ENCODE measurements at regions of chr11 and their contacts with region 1.

Region 1: DNA sequence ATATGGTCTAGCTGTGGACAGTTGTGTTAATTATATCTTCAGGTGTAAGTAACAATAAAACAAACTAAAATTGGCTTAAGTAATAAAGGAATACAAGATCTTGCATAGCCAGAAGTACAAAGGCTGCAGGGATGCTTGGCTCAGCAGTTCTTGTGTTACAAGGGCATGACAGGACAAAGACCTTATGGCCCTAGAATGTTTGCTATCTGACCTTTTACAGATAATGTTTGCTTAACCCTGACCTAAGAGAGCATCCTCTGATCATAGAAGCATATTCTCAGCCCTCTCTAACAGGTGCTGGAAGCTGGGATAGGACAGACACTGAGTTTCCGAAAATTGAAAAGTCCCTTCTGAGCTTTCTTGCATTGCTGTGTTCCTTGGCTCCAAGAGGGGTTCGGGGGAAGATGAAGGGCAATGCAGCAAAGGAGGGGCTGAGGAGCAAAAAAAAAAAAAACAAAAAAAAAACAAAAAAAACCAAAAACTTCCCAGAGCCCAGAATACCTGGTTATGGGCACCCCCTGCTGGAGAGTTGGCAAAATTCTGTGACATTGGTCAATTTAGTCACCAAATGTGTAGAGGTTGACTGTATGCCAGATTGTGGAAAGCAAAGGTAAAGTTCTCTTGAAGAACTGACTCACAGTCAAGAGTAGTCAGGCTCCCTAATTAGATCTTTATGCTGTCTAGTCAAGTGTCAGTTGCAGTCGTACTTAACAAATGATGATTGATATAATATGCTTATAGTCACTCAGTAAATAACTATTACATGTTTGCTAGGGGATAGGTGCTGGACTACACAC is 10.4 kb upstream of the HIKESHI start:
- DNase-seq: peak; percentile 27
- ATAC-seq: peak; percentile 48
- H3K4me3 ChIP-seq: no peak overlapping the region
- H3K27ac ChIP-seq: no peak overlapping the region; the same call in 1 of the 2 replicates
- H3K4me1 ChIP-seq: peaks cover 41% of the 10 kb centered on the region
- H3K27me3 ChIP-seq: no peaks in the 10 kb centered on the region
- CTCF ChIP-seq: peak; percentile 70 to 79 (median 71)
- EP300 ChIP-seq: no peak
- POLR2A ChIP-seq: no peak
- RAD21 ChIP-seq: peak; percentile 95

Region 2: DNA sequence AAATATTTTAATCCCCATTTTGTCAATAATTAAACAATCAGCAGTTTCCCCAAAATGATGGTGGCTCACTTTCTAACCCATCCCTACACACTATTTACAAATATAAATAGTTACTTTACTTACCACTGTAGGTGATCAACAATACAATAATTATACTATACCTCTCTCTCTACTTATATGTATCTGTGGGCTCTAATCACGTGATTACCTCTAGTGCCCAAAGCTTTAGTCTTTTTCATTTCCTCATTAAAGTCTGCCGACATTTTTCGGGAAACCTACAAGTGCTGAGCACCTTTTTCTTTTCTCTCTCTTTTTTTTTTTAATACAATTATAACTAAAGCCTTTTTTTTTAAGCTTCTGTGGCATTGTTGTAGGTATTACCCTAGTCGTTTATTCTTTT is 688.4 kb before region 1 on chr11:
- CTCF ChIA-PET with region 1: no interaction called
- POLR2A ChIA-PET with region 1: no interaction called
- RAD21 ChIA-PET with region 1: no interaction called
- SMC1A ChIA-PET with region 1: no interaction called
- in situ Hi-C with region 1: no loop called
- intact Hi-C with region 1: no loop called
- DNase-seq: no peak
- ATAC-seq: no peak
- H3K4me3 ChIP-seq: no peak overlapping the region
- H3K27ac ChIP-seq: no peak overlapping the region
- H3K4me1 ChIP-seq: no peaks in the 10 kb centered on the region
- H3K27me3 ChIP-seq: no peaks in the 10 kb centered on the region
- CTCF ChIP-seq: no peak
- EP300 ChIP-seq: no peak
- POLR2A ChIP-seq: no peak
- RAD21 ChIP-seq: no peak

Region 3: DNA sequence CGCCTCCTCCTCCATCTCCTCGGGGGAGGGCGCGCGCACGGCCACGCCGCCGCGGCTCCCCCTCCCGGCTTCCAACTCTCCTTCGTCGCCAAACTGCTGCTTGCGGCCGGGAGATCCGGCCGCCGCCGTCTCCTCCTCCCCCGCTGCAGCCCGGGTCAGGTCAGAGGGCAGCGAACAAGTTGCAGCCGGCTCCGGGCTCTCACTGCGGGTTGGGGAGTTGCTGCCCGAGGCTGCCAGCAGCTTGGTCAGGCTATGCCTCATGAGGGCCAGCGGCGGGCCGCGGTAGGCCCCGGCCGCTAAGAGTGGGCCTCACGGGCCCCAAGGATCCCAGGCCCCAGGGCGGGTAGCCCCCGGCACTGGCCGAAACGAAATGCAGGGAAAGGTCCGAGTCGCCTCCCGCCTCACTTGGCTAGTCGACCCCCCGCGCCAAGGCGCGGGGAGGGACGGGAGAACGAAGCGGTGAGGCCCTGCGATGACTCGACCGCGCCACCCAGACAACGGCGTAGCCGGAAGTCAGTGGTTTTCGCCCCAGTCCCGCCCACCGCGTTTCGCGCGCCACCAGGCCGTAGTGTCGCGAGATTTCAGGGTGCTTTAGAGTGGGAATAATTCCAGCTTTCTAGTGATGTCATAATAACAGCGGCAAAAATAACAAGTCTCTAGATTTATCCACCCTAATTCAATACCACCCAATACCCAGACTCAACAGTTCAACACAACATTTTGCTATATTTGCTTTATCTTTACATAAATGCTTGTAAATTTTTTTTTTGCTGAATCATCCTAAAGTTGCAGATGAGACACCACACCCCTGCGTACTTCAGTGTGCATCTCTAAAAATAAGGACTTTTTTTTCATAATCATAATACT is 626.8 kb before region 1 on chr11 and contains the start of gene CREBZF:
- CTCF ChIA-PET with region 1: no interaction called
- POLR2A ChIA-PET with region 1: no interaction called
- RAD21 ChIA-PET with region 1: no interaction called
- SMC1A ChIA-PET with region 1: no interaction called
- in situ Hi-C with region 1: no loop called
- intact Hi-C with region 1: loop called (anchors 10 kb)
- DNase-seq: peak; percentile 84
- ATAC-seq: peak; percentile 89
- H3K4me3 ChIP-seq: peak within 1 kb of the TSS; percentile 91
- H3K27ac ChIP-seq: peak within 1 kb of the TSS; percentile 87
- H3K4me1 ChIP-seq: no peaks in the 10 kb centered on the region
- H3K27me3 ChIP-seq: no peaks in the 10 kb centered on the region
- CTCF ChIP-seq: no peak
- EP300 ChIP-seq: no peak
- POLR2A ChIP-seq: peak; percentile 94
- RAD21 ChIP-seq: no peak
- polyA plus RNA-seq, gene CREBZF: 11.1 TPM

Region 4: GRCh38 chr11:85854557-85855340 is 436.9 kb before region 1 on chr11:
- CTCF ChIA-PET with region 1: interaction called, 8 read pairs
- POLR2A ChIA-PET with region 1: no interaction called
- RAD21 ChIA-PET with region 1: interaction called, 13 read pairs
- SMC1A ChIA-PET with region 1: interaction called, 4 read pairs
- in situ Hi-C with region 1: loop called (anchors 5 kb)
- intact Hi-C with region 1: loop called (anchors 2 kb)
- DNase-seq: peak; percentile 57
- ATAC-seq: peak; percentile 100
- H3K4me3 ChIP-seq: peak overlapping the region; percentile 75
- H3K27ac ChIP-seq: peak overlapping the region; percentile 27; the same call in 1 of the 2 replicates
- H3K4me1 ChIP-seq: peaks cover 8% of the 10 kb centered on the region
- H3K27me3 ChIP-seq: no peaks in the 10 kb centered on the region
- CTCF ChIP-seq: peak; percentile 77 to 95 (median 82)
- EP300 ChIP-seq: no peak
- POLR2A ChIP-seq: peak; percentile 71
- RAD21 ChIP-seq: peak; percentile 83

Region 5: GRCh38 chr11:85941380-85941973 is 350.2 kb before region 1 on chr11:
- CTCF ChIA-PET with region 1: interaction called, 5 read pairs
- POLR2A ChIA-PET with region 1: no interaction called
- RAD21 ChIA-PET with region 1: no interaction called
- SMC1A ChIA-PET with region 1: interaction called, 4 read pairs
- in situ Hi-C with region 1: no loop called
- intact Hi-C with region 1: loop called (anchors 5 kb)
- DNase-seq: no peak
- ATAC-seq: peak; percentile 77
- H3K4me3 ChIP-seq: no peak overlapping the region
- H3K27ac ChIP-seq: no peak overlapping the region
- H3K4me1 ChIP-seq: no peaks in the 10 kb centered on the region
- H3K27me3 ChIP-seq: no peaks in the 10 kb centered on the region
- CTCF ChIP-seq: peak; percentile 51 to 54 (median 52)
- EP300 ChIP-seq: no peak
- POLR2A ChIP-seq: no peak
- RAD21 ChIP-seq: peak; percentile 72

Region 6: GRCh38 chr11:86202013-86202336 is 89.7 kb before region 1 on chr11:
- CTCF ChIA-PET with region 1: interaction called, 10 read pairs
- POLR2A ChIA-PET with region 1: interaction called, 6 read pairs
- RAD21 ChIA-PET with region 1: interaction called, 4 read pairs
- SMC1A ChIA-PET with region 1: interaction called, 4 read pairs
- in situ Hi-C with region 1: no loop called
- intact Hi-C with region 1: loop called (anchors 2 kb)
- DNase-seq: no peak
- ATAC-seq: peak; percentile 85
- H3K4me3 ChIP-seq: peak overlapping the region; percentile 66
- H3K27ac ChIP-seq: peak overlapping the region; percentile 82
- H3K4me1 ChIP-seq: peaks cover 15% of the 10 kb centered on the region
- H3K27me3 ChIP-seq: no peaks in the 10 kb centered on the region
- CTCF ChIP-seq: no peak
- EP300 ChIP-seq: no peak
- POLR2A ChIP-seq: no peak
- RAD21 ChIP-seq: no peak

Region 7: DNA sequence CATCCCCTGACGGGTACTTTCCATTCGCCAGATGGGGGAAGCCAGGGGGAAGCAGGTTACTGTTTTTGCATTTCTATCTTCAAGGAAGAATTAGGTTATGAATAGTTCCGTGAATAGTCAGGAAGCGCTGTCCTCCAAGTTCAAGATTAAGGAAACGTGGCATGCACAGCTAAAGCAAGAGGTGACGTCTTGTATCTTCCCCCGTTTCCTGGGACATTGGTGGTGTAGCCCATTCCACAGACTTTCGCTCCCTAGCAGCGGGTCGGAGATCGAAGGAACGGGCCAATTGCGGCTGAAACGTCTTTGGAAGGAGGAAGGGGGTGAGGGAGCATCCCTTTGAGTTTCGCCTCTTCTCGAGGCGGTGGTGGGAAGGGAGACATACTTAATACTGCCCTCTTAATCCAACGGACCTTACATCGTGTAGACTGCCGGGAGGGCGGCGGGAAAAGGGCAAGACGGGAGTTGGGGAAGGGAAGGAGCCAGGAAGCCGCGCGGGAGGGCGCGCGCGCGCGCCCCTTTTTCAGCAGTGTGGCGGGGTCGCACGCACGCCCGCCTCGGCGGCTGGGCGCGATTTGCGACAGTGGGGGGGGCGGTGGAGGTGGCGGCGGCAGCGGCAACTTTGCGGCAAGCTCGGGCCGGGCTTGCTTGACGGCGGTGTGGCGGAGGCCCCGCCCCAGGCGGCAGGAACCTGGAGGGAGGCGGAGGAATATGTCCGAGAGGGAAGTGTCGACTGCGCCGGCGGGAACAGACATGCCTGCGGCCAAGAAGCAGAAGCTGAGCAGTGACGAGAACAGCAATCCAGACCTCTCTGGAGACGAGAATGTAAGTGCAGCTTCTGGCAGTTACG is 46.9 kb before region 1 on chr11 and contains the start of gene EED:
- CTCF ChIA-PET with region 1: interaction called, 4 read pairs
- POLR2A ChIA-PET with region 1: interaction called, 5 read pairs
- RAD21 ChIA-PET with region 1: interaction called, 3 read pairs
- SMC1A ChIA-PET with region 1: interaction called, 4 read pairs
- in situ Hi-C with region 1: no loop called
- intact Hi-C with region 1: loop called (anchors 2 kb)
- DNase-seq: peak; percentile 86
- ATAC-seq: peak; percentile 77
- H3K4me3 ChIP-seq: peak within 1 kb of the TSS; percentile 81
- H3K27ac ChIP-seq: peak within 1 kb of the TSS; percentile 98
- H3K4me1 ChIP-seq: peaks cover 12% of the 10 kb centered on the region
- H3K27me3 ChIP-seq: no peaks in the 10 kb centered on the region
- CTCF ChIP-seq: no peak
- EP300 ChIP-seq: peak in 1 of 2 experiments; percentile 25; a peak in 1 of 4 replicates
- POLR2A ChIP-seq: peak; percentile 80
- RAD21 ChIP-seq: no peak
- polyA plus RNA-seq, gene EED: 101 to 140 TPM

Region 8: DNA sequence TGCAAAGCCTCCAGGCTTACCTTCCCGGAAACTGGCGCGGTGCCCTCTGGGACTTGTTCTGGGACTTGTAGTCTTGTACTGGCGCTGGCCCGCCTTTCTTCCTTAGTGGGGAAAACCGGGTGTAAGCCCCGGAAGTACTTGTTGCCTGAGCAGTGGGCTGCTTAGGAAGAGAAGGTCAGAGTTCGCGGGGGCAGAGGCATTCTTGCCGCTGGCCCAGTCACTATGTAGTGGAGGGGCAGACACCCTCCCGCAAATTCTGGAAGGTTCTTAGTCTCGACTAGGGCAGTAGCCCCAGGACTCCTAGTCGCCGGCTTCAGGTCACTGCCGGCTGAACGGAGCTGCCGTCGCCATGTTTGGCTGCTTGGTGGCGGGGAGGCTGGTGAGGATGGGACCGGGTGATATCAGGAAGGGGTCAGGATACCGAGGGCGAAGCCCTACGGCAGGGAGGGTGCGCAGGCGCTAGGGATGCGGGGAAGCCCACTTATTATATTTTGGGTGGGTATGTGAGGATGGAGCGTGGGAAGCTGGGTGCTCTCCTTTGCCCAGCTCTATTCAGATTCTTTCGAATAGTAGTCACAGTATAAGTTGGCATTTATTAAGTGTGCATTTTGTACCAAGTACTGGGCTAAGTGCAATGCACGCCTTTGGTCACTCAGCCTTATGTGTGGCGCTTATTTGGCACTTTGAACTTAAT is 10.6 kb after region 1 on chr11 and contains the start of gene HIKESHI:
- CTCF ChIA-PET with region 1: interaction called, 17 read pairs
- POLR2A ChIA-PET with region 1: interaction called, 6 read pairs
- RAD21 ChIA-PET with region 1: interaction called, 4 read pairs
- SMC1A ChIA-PET with region 1: interaction called, 9 read pairs
- in situ Hi-C with region 1: no loop called
- intact Hi-C with region 1: no loop called
- DNase-seq: peak; percentile 76
- ATAC-seq: peak; percentile 99
- H3K4me3 ChIP-seq: peak within 1 kb of the TSS; percentile 87
- H3K27ac ChIP-seq: peak within 1 kb of the TSS; percentile 87
- H3K4me1 ChIP-seq: 0 out of 2 replicates have a peak, but pooled peaks cover 3% of the 10 kb centered on the region
- H3K27me3 ChIP-seq: no peaks in the 10 kb centered on the region
- CTCF ChIP-seq: no peak
- EP300 ChIP-seq: no peak
- POLR2A ChIP-seq: peak; percentile 91
- RAD21 ChIP-seq: no peak
- polyA plus RNA-seq, gene HIKESHI: 156 to 228 TPM